B cell (primary cell): ENCODE measurements at regions of chr16 and their contacts with region 1.

Region 1: GRCh38 chr16:19555162-19555937 is at the start of gene VPS35L:
- DNase-seq: peak; percentile 99
- ATAC-seq: peak; percentile 94
- H3K4me3 ChIP-seq: peak within 1 kb of the TSS; percentile 68 to 92 (median 87)
- H3K4me3 Mint-ChIP-seq: peak within 1 kb of the TSS; percentile 93
- H3K27ac ChIP-seq: peak within 1 kb of the TSS; percentile 81 to 88
- H3K27ac Mint-ChIP-seq: peak within 1 kb of the TSS; percentile 93
- H3K4me1 ChIP-seq: peaks cover 7 to 19% of the 10 kb centered on the region in 2 donors
- H3K4me1 Mint-ChIP-seq: peaks cover 24% of the 10 kb centered on the region
- H3K27me3 ChIP-seq: no peaks in the 10 kb centered on the region
- H3K27me3 Mint-ChIP-seq: no peaks in the 10 kb centered on the region
- CTCF ChIP-seq: peak; percentile 92
- total RNA-seq, gene VPS35L: 62.1 and 63.6 TPM in 2 replicates

Region 2: DNA sequence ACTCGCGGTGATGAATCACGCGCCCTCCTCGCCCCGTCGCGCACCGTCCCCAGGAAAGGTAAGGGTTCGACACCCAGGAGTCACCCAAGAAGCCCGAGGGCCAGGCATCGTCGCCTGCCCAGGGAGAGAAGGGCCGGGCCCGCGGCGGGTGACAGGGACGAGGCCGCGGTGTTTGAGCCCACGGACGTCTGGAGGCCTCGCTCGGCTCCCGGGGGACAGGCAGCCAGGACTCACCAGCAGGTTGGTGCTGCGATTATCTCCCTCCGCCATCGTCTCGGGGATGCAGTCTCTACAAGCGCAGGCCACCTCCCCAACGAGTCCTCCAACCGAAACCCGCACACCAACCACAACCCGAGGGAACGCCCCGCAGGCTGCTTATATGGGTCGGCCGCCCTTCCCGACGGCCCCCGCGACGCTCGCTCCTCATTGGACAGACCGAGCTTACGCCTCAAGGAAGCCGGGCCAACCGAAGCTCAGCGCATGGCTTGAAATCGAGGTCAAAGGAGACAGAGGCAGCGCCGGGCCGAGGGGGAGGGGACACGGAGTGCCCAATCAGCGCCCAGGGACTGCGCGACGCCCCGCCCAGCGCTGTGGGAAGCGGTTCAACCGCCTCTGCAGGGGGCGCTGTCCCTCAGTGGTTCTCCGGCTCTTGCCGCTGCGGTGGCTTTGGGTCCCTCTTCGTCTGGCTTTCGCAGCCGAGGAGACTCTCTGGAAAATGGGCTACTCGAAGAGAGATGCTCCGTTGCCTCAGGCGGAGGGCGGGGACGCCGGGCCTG is 754.0 kb before region 1 on chr16 and contains the start of gene ARL6IP1:
- CTCF ChIA-PET with region 1: interaction called, 3 read pairs
- POLR2A ChIA-PET with region 1: interaction called, 3 read pairs
- intact Hi-C with region 1: loop called (anchors 1 kb)
- DNase-seq: peak; percentile 100
- ATAC-seq: peak; percentile 96
- H3K4me3 ChIP-seq: peak within 1 kb of the TSS; percentile 76 to 94 (median 85)
- H3K4me3 Mint-ChIP-seq: peak within 1 kb of the TSS; percentile 92
- H3K27ac ChIP-seq: peak within 1 kb of the TSS; percentile 92 to 95
- H3K27ac Mint-ChIP-seq: peak within 1 kb of the TSS; percentile 95
- H3K4me1 ChIP-seq: peaks cover 16 to 21% of the 10 kb centered on the region in 2 donors
- H3K4me1 Mint-ChIP-seq: peaks cover 38% of the 10 kb centered on the region
- H3K27me3 ChIP-seq: no peaks in the 10 kb centered on the region
- H3K27me3 Mint-ChIP-seq: no peaks in the 10 kb centered on the region
- CTCF ChIP-seq: peak; percentile 96
- total RNA-seq, gene ARL6IP1: 106 and 109 TPM in 2 replicates

Region 3: DNA sequence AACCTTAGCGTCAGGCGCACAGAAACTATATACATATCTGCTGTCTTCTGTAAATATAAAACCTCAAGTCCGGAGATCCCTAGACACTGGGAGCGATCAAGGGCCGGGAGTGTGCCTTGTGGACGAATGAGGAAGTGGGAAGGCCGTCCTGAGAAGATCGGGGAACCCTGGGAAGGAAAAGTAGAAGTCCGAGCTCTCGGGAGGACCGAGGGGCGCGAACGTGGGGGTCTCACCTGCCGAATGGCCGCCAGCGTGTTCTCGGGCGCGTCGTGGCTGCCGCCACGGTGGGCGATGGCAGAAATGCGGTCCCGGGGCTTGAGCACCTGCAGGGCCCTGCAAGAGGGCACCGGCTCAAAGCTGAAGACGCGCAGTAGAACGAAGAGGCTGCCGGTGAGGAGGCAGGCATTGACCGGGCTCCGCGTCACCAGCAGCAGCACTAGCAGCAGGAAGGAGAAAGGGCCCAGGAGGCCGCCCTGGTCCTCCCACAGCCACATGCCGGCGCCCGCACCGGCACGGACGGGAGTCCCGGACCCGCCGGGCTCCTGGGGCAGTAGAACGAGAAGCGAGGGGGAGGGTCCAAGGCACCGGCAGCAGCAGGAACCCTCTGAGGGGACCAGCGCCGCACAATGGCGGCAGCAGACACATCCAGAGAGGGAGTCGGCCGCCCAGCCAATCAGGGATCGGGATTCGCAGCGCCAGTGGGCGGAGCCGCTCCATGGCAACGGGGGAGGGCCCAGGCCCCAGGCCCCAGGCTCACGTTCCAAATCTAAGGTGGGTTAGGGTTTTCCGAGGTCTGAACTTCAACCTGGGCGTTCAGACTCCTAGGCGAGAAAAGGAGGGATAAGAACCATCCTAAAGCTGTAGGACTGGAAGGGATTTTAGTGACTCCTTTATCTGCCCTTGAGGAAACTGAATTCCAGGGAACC is 33.6 kb before region 1 on chr16 and contains the start of gene GDE1:
- CTCF ChIA-PET with region 1: interaction called, 13 read pairs
- POLR2A ChIA-PET with region 1: interaction called, 19 read pairs
- intact Hi-C with region 1: loop called (anchors 1 kb)
- DNase-seq: peak; percentile 91
- ATAC-seq: peak; percentile 78
- H3K4me3 ChIP-seq: peak within 1 kb of the TSS; percentile 56 to 87 (median 79)
- H3K4me3 Mint-ChIP-seq: peak within 1 kb of the TSS; percentile 95
- H3K27ac ChIP-seq: peak within 1 kb of the TSS; percentile 39 to 75
- H3K27ac Mint-ChIP-seq: peak within 1 kb of the TSS; percentile 89
- H3K4me1 ChIP-seq: peaks cover 19 to 37% of the 10 kb centered on the region in 2 donors
- H3K4me1 Mint-ChIP-seq: peaks cover 37% of the 10 kb centered on the region
- H3K27me3 ChIP-seq: no peaks in the 10 kb centered on the region
- H3K27me3 Mint-ChIP-seq: no peaks in the 10 kb centered on the region
- CTCF ChIP-seq: peak; percentile 21
- total RNA-seq, gene GDE1: 24.1 and 25.3 TPM in 2 replicates

Region 4: DNA sequence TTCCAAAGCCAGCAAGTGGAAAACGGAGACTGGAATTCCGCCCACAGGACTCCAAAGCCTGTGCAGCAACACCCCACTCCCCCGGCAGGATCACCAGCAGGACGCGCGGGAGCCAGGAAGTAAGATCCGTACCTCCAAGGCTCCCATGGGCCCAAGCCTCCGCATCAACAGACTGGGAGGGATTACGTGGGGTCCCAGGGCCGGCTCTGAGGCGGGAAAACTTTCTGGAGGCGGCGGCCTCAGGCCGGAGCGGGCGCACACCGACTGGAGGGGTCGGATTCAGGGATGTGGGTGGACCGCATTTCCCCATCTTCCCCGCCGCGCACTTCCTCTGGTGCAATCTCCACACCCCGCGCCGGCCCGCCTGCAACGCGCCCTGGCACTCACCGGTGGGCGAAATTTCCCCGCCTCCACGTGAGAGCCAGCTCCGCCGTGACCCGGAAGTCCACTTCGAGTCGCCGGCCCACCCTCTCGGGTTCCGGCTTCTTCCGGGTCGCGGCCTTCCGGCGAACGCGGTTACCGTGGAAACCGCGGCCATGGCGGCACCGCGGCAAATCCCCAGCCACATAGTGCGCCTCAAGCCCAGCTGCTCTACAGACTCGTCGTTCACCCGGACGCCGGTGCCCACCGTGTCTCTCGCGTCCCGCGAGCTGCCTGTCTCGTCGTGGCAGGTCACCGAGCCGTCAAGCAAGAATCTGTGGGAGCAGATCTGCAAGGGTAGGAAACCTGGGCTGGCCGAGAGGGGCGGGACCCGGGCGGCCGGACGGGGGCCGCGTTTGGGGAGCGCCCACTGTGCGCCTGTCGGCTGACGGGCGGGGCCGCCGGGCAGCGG is 162.6 kb after region 1 on chr16 and contains the starts of genes IQCK and KNOP1:
- CTCF ChIA-PET with region 1: interaction called, 8 read pairs
- POLR2A ChIA-PET with region 1: interaction called, 4 read pairs
- intact Hi-C with region 1: loop called (anchors 1 kb)
- DNase-seq: peak; percentile 94
- ATAC-seq: peak; percentile 93
- H3K4me3 ChIP-seq: peak within 1 kb of the TSS; percentile 68 to 99 (median 89)
- H3K4me3 Mint-ChIP-seq: peak within 1 kb of the TSS; percentile 93
- H3K27ac ChIP-seq: peak within 1 kb of the TSS in 1 of 2 donors; percentile 52
- H3K27ac Mint-ChIP-seq: peak within 1 kb of the TSS; percentile 81
- H3K4me1 ChIP-seq: peaks cover 11 to 13% of the 10 kb centered on the region in 2 donors
- H3K4me1 Mint-ChIP-seq: peaks cover 19% of the 10 kb centered on the region
- H3K27me3 ChIP-seq: no peaks in the 10 kb centered on the region
- H3K27me3 Mint-ChIP-seq: no peaks in the 10 kb centered on the region
- CTCF ChIP-seq: no peak
- total RNA-seq, gene IQCK: 3.0 and 4.3 TPM in 2 replicates
- total RNA-seq, gene KNOP1: 12.0 and 16.9 TPM in 2 replicates

Region 5: DNA sequence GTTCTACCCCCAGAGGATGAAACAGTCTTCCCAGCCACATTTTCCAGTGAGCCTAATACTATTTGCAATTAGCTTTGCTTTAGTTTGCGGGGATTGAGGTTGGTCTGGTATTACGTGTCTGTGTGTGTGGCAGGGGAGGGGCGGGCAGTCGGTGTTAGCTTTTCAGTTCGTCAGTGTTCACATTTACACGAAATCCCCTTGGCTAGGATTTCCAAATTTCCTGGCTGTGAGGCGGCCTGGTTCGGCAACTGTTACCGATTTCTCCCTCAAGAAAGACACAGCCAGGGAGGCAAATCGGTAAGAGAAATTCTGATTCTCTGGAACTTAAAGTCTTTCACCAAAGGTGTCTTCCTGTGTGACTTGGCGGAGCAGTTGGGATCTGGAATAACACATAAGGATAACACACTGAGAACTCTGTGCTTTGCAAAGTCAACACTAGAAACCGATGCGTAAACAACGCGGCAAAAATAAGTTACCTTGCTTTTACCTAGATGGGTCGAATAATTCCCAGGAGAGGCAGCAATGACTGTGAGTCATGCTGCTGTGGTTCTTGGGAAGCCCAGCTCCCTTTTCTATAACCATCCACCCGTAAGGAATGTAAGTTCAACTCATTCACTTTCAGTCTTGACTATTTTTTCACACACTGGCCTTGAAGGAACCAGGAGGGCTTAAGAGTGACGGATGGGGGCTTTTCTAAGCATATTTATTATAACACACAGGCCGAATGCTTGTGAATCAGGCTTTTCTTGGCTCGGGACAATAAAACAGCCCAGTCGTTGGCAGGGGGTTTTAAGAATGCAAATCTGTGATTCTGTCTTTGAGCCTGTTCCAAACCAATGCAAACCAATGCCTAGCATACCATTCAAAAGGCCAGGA is 305.1 kb after region 1 on chr16:
- CTCF ChIA-PET with region 1: no interaction called
- POLR2A ChIA-PET with region 1: no interaction called
- intact Hi-C with region 1: no loop called
- DNase-seq: no peak
- ATAC-seq: no peak
- H3K4me3 ChIP-seq: no peak overlapping the region
- H3K4me3 Mint-ChIP-seq: no peak overlapping the region
- H3K27ac ChIP-seq: no peak overlapping the region
- H3K27ac Mint-ChIP-seq: no peak overlapping the region
- H3K4me1 ChIP-seq: no peaks in the 10 kb centered on the region
- H3K4me1 Mint-ChIP-seq: no peaks in the 10 kb centered on the region
- H3K27me3 ChIP-seq: no peaks in the 10 kb centered on the region
- H3K27me3 Mint-ChIP-seq: peaks cover 9% of the 10 kb centered on the region
- CTCF ChIP-seq: no peak

Region 6: DNA sequence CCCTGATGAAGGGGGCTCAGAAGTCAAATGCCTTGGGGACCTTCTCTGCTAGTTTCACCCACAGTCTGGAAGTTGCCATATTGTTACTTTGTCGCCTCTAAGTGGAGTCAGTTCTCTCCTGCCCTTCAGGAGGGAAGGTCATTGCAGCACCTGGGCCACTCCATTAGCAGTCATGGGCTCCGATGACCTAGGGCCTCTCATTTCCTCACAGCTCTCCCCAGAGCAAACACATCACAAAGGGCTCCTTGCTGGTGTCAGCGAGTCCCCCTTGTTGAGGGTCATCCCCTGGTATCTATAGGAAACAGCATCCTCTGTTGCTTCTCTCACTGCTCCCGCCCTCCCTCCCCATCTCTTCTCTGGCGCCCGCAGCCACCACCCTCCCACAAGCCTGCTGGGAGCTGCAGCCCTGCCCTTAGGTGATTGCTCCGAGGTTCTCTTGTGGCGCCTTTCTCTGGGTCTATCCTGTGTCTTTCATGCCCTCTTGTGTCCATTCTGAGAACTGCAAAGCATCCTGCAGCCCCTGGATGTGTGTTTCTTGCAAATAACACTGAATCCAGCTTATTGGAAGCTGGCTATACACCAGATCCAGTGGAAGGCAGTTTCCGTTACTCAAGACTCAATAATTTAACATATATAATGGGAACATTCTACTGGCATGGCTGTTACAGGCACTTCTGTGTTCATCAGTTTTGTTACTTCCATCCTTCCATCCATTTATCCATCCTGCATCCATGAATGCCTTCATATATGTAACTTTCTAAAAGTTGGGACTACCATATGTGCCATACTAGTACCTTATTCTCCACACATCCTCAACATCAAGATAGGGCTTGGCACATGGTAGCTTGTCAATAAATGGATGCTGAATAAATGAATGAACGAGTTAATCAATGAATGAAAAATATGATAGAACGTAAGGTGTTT is 828.0 kb after region 1 on chr16:
- CTCF ChIA-PET with region 1: interaction called, 10 read pairs
- POLR2A ChIA-PET with region 1: no interaction called
- intact Hi-C with region 1: no loop called
- DNase-seq: peak; percentile 54
- ATAC-seq: no peak
- H3K4me3 ChIP-seq: no peak overlapping the region
- H3K4me3 Mint-ChIP-seq: no peak overlapping the region
- H3K27ac ChIP-seq: no peak overlapping the region
- H3K27ac Mint-ChIP-seq: no peak overlapping the region
- H3K4me1 ChIP-seq: no peaks in the 10 kb centered on the region
- H3K4me1 Mint-ChIP-seq: peaks cover 2% of the 10 kb centered on the region
- H3K27me3 ChIP-seq: peaks cover 0 to 21% (median 1%) of the 10 kb centered on the region in 4 experiments
- H3K27me3 Mint-ChIP-seq: peaks cover 25% of the 10 kb centered on the region
- CTCF ChIP-seq: peak; percentile 79